HCT116 (cell line): ENCODE measurements at regions of chr18 and their contacts with region 1.

Region 1: GRCh38 chr18:2932247-2933181 is 80.4 kb downstream of the LPIN2 start:
- DNase-seq: peak; percentile 34
- ATAC-seq: peak; percentile 63
- H3K4me3 ChIP-seq: no peak overlapping the region
- H3K27ac ChIP-seq: no peak overlapping the region
- H3K4me1 ChIP-seq: no peaks in the 10 kb centered on the region
- H3K27me3 ChIP-seq: no peaks in the 10 kb centered on the region
- CTCF ChIP-seq: peak; percentile 54 to 78 (median 75)
- POLR2A ChIP-seq: no peak
- RAD21 ChIP-seq: peak; percentile 80

Region 2: GRCh38 chr18:3129053-3129864 is 196.7 kb after region 1 on chr18:
- CTCF ChIA-PET with region 1: interaction called, 7 read pairs
- POLR2A ChIA-PET with region 1: no interaction called
- RAD21 ChIA-PET with region 1: no interaction called
- intact Hi-C with region 1: loop called (anchors 5 kb)
- DNase-seq: peak; percentile 72
- ATAC-seq: peak; percentile 100
- H3K4me3 ChIP-seq: no peak overlapping the region
- H3K27ac ChIP-seq: no peak overlapping the region
- H3K4me1 ChIP-seq: peaks cover 3 to 5% of the 10 kb centered on the region in 2 experiments; a peak in 1 of 4 replicates
- H3K27me3 ChIP-seq: no peaks in the 10 kb centered on the region
- CTCF ChIP-seq: peak; percentile 89 to 98 (median 96)
- POLR2A ChIP-seq: no peak
- RAD21 ChIP-seq: peak; percentile 65

Region 3: DNA sequence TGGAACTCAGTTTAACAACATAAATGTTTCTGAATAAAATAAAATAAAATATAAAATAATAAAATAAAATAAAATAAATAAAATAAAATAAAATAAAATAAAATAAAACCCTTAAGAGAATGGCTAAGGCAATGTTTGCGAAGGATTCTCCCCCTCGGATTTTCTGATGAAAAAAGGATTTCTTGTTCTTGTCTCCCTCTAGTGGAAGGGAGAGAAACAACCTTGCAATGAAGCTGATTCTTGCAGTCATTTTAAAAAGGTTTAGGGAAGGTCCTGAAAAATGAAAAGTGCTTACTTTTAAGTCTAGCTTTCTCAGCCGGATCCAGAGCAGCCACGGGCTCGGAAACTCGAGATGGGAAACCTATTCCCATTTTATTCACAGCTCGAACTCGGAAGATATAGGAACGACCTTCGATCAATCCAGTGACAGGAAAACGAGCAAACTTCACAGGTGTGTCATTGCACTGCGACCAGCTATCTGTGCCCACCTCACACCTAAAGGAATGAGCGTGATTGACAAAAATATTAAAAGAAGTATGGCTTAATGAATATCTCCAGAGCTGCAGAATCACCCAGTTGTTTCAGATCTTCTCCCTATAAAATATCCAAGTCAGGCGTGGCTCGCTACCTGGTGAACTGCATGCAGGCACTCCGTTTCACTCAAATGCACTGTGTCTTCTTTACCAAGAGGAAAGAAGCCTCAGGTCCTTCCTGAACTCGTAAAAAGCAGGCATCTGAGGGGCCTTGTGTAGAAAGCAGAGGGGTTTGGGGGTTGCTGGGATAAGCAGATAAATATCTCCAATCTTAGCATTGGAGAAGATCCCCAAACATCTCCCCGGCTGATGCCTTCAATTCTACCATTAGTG is 219.1 kb after region 1 on chr18:
- CTCF ChIA-PET with region 1: interaction called, 6 read pairs
- POLR2A ChIA-PET with region 1: no interaction called
- RAD21 ChIA-PET with region 1: no interaction called
- intact Hi-C with region 1: loop called (anchors 5 kb)
- DNase-seq: no peak
- ATAC-seq: no peak
- H3K4me3 ChIP-seq: no peak overlapping the region
- H3K27ac ChIP-seq: no peak overlapping the region
- H3K4me1 ChIP-seq: no peaks in the 10 kb centered on the region
- H3K27me3 ChIP-seq: no peaks in the 10 kb centered on the region
- CTCF ChIP-seq: peak; percentile 46 to 72 (median 62); a peak in 5 of 6 replicates
- POLR2A ChIP-seq: no peak
- RAD21 ChIP-seq: peak; percentile 66

Region 4: DNA sequence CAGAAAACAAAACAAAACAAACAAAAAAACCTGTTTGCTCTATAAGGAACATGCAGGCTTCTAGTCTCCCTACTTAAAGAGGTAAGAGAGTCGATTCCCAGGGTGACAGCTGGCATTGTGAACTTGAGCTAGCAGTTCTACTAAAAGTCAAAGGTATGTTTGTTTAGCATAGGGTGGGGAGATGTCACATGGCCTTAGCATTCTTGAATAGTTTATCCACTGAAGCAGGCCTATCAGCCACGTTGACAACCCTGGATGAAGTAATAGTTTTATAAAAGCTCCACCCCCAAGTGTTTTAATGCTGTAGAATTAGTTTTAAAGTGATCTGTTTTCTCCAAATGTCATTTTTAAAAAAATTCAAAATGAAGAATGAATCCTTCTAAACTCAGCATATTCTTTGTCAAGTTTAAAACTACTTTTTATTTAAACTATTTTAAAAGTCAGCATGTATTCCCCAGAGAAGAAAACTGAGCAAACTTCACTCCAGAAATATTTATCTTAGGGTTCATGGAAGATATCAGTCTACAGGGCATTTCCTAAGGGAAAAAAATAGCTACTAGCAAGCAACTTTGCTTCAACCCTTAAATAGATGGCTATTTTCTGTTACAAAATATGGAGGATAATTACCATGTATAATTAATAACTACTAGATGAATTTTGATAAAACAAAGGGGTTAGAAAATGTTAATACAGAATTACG is 285.6 kb after region 1 on chr18:
- CTCF ChIA-PET with region 1: no interaction called
- POLR2A ChIA-PET with region 1: no interaction called
- RAD21 ChIA-PET with region 1: no interaction called
- intact Hi-C with region 1: no loop called
- DNase-seq: no peak
- ATAC-seq: no peak
- H3K4me3 ChIP-seq: no peak overlapping the region
- H3K27ac ChIP-seq: no peak overlapping the region
- H3K4me1 ChIP-seq: no peaks in the 10 kb centered on the region
- H3K27me3 ChIP-seq: no peaks in the 10 kb centered on the region
- CTCF ChIP-seq: no peak
- POLR2A ChIP-seq: no peak
- RAD21 ChIP-seq: no peak

Region 5: DNA sequence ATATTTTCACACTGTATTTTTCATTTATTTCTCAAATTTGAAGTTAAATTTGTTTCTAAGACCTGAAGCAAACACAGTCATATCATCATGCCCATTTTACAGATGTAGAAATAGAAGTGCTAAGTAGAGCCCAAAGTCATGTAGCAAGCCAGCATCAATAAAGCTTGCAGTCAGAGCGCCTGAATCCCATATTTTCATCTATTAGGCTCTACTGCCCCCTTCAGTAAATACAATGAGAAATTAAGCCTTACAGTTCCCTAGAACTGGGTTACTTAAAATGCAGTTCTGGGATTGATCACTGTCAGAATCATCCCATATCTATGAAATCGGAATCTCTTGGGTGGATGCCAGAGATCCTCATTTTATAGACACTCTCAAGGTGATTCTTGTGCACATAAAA is 937.3 kb after region 1 on chr18:
- CTCF ChIA-PET with region 1: no interaction called
- POLR2A ChIA-PET with region 1: no interaction called
- RAD21 ChIA-PET with region 1: no interaction called
- intact Hi-C with region 1: loop called (anchors 5 kb)
- DNase-seq: peak; percentile 40
- ATAC-seq: peak; percentile 87
- H3K4me3 ChIP-seq: no peak overlapping the region
- H3K27ac ChIP-seq: no peak overlapping the region
- H3K4me1 ChIP-seq: no peaks in the 10 kb centered on the region
- H3K27me3 ChIP-seq: peaks cover 42% of the 10 kb centered on the region
- CTCF ChIP-seq: peak; percentile 31 to 59 (median 51); a peak in 4 of 6 replicates
- POLR2A ChIP-seq: no peak
- RAD21 ChIP-seq: peak; percentile 74